Heart right ventricle (tissue), 16 donors: ENCODE measurements at regions of chr1 and their contacts with region 1.

Region 1: GRCh38 chr1:71068325-71069240 is 12.3 kb downstream of the ZRANB2 start:
- DNase-seq: no peak
- ATAC-seq: no peak
- H3K4me3 ChIP-seq: no peak overlapping the region
- H3K27ac ChIP-seq: no peak overlapping the region
- H3K4me1 ChIP-seq: peaks cover 0 to 7% (median 0%) of the 10 kb centered on the region in 9 donors
- H3K27me3 ChIP-seq: no peaks in the 10 kb centered on the region
- CTCF ChIP-seq: no peak

Region 2: DNA sequence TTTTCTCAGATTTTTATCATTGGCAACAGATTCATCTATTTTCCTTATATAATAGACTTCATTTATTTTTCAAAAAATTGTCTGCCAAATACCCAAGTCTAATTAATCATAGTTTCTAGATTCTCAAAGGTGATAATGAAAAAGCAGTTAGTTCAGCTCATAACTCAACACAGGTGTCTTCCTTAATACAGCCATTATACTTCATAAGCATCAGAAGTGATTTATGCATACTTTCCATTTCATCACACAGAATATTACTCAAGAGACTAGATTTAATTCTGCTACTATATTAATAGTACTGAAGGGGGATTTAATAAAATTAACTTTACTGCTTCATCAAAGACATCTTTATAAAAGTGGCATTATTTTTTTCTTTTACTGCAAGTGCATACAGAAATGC is 828.6 kb before region 1 on chr1:
- intact Hi-C with region 1: loop called in 2 of 10 experiments (anchors 5 to 10 kb)
- DNase-seq: no peak
- ATAC-seq: no peak
- H3K4me3 ChIP-seq: no peak overlapping the region
- H3K27ac ChIP-seq: no peak overlapping the region
- H3K4me1 ChIP-seq: no peaks in the 10 kb centered on the region
- H3K27me3 ChIP-seq: no peaks in the 10 kb centered on the region
- CTCF ChIP-seq: no peak

Region 3: GRCh38 chr1:70247768-70248167 is 820.8 kb before region 1 on chr1:
- intact Hi-C with region 1: loop called in 2 of 10 experiments (anchors 5 to 10 kb)
- DNase-seq: no peak
- ATAC-seq: no peak
- H3K4me3 ChIP-seq: no peak overlapping the region
- H3K27ac ChIP-seq: peak overlapping the region in 1 of 10 donors; percentile 39
- H3K4me1 ChIP-seq: peaks cover 0 to 20% (median 6%) of the 10 kb centered on the region in 9 donors
- H3K27me3 ChIP-seq: no peaks in the 10 kb centered on the region
- CTCF ChIP-seq: no peak

Region 4: GRCh38 chr1:71509051-71509595 is 440.5 kb after region 1 on chr1:
- intact Hi-C with region 1: no loop called
- DNase-seq: no peak
- ATAC-seq: no peak
- H3K4me3 ChIP-seq: no peak overlapping the region
- H3K27ac ChIP-seq: no peak overlapping the region
- H3K4me1 ChIP-seq: no peaks in the 10 kb centered on the region
- H3K27me3 ChIP-seq: no peaks in the 10 kb centered on the region
- CTCF ChIP-seq: no peak